ENCODE measurements at regions of chr2 and their contacts with region 1.

Region 1: DNA sequence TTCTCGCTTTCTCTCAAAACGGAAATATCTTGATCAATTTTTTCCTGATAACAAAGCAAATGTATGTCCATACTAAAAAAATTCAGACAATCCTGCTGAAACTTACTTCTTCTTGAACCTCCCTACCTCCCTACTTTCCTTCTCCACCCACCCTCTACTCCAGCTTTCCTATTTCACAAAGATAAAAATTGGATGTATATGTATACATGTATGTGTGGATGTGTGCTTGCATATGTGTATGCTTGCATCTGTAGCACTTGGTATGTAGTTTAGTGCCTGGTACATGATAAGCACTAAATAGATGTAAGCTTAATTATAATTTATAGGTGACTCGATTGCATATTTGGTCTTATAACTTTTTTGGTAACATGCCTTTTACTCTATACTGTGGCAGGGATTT is 167.5 kb upstream of the ITGA4 start:
- DNase-seq: no peak
- H3K4me3 ChIP-seq: no peak overlapping the region
- H3K27ac ChIP-seq: no peak overlapping the region
- H3K4me1 ChIP-seq: no peaks in the 10 kb centered on the region
- H3K27me3 ChIP-seq: no peaks in the 10 kb centered on the region
- CTCF ChIP-seq: no peak

Region 2: DNA sequence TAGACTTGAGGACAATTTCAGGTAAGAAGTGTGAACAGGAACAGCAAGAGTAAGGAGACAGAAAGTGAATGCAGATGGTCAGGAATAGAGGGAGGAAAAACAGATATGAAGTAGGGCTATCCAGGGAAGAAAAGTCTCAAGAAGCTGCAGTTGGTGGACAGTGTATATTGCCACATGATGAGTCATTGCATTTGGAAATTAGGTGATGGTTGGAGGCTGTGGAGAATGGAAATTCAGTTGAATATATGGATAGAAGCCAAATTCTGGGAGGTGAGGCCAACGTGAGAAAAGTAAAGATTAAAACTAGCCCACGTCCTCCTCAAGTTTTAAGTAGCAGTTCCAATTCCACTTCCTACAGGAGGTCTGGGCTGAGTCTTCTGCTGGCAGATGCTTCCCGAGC is 150.9 kb before region 1 on chr2:
- CTCF ChIA-PET with region 1: no interaction called
- POLR2A ChIA-PET with region 1: no interaction called
- intact Hi-C with region 1: loop called (anchors 10 kb)
- DNase-seq: peak; percentile 6 to 49
- H3K4me3 ChIP-seq: no peak overlapping the region
- H3K27ac ChIP-seq: no peak overlapping the region
- H3K4me1 ChIP-seq: peaks cover 24% of the 10 kb centered on the region
- H3K27me3 ChIP-seq: no peaks in the 10 kb centered on the region
- CTCF ChIP-seq: no peak

Region 3: GRCh38 chr2:181268174-181268867 is 21.4 kb before region 1 on chr2:
- CTCF ChIA-PET with region 1: no interaction called
- POLR2A ChIA-PET with region 1: no interaction called
- intact Hi-C with region 1: no loop called
- DNase-seq: no peak
- H3K4me3 ChIP-seq: no peak overlapping the region
- H3K27ac ChIP-seq: no peak overlapping the region
- H3K4me1 ChIP-seq: no peaks in the 10 kb centered on the region
- H3K27me3 ChIP-seq: no peaks in the 10 kb centered on the region
- CTCF ChIP-seq: no peak

Region 4: GRCh38 chr2:181430406-181431118 is 140.9 kb after region 1 on chr2:
- CTCF ChIA-PET with region 1: no interaction called
- POLR2A ChIA-PET with region 1: no interaction called
- intact Hi-C with region 1: no loop called
- DNase-seq: no peak
- H3K4me3 ChIP-seq: no peak overlapping the region
- H3K27ac ChIP-seq: no peak overlapping the region
- H3K4me1 ChIP-seq: no peaks in the 10 kb centered on the region
- H3K27me3 ChIP-seq: no peaks in the 10 kb centered on the region
- CTCF ChIP-seq: peak; percentile 61

Measured in PC-9 (cell line).